ENCODE measurements at regions of chr16 and their contacts with region 1.

Region 1: DNA sequence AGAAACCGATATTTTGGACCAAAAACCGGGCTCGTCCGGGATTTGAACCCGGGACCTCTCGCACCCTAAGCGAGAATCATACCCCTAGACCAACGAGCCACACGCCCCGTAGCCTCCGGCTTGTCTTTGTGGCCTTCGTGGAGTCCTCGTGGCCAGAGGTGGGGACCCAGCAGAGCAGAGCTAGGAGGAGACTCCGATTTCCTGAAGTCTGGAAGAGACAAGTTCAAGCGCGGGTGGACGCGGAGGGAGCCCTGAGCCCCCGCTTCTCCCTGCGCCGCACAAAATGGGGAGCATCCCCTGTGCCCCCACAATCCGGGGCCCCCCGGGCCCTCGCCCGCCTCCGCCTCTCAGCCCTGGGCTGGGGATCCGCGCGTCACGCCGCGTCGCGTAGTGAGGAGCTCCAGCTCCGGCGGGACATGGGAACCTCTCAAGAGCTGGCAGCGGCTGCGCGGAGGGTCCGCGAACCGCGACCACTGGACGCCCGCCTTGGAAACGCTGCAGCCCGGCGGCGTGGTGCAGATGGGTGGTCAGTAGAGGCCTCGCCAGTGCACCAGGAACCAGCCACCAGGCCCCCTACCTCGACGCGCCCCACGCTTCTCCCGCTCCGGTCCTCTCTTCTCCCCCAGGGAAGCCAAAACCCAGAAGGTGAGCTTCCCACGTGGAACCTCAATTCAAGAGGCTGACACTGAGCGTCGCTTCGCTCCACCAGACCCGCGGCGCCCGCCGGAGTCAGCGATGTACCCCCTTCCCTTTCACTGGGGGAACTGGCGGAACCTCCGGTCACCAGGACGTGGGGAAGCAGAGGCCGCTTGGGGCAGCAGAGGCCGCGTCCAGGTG is 5.2 kb upstream of the OR1F1 start:
- DNase-seq: no peak
- ATAC-seq: peak; percentile 84
- H3K4me3 ChIP-seq: peak overlapping the region; percentile 64 to 85
- H3K27ac ChIP-seq: peak overlapping the region; percentile 42; the same call in 1 of the 2 replicates
- H3K4me1 ChIP-seq: peaks cover 8% of the 10 kb centered on the region
- H3K27me3 ChIP-seq: no peaks in the 10 kb centered on the region
- CTCF ChIP-seq: peak; percentile 83; the same call in 1 of the 2 replicates

Region 2: DNA sequence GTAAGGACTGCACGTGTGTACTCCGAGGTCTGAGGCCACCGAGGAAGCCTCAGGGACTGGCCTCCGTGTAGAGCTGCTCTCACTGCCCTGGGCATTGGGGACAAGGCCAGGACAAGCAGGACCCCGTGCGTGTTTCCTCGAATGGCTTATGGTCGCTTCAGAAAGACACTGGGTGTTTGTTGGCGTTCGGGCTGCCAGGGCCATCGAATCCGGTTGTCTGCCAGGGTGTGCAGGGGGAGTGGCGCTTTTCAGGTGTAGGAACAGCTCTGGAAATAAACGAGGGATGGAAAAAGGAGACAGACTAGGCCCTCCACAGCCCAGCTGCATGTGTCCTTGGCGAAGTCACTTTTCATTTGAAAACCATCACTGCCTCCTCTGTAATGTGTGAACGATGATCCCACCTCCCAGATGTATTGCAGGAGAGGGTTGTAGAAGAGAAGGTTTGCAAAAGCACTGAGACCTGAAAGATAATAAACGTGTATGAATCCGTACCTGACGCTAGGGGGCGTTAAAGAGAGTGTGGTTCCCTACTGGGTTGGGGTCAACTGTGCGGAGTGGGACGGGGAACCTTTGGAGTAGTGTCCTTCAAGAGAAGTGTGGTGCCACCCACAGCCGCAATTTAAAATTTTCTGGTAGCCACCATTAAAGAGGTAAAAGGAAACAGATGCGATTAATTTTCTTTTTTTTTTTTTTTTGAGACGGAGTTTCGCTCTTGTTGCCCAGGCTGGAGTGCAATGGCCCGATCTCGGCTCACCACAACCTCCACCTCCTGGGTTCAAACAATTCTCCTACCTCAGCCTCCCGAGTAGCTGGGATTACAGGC is 81.6 kb before region 1 on chr16:
- CTCF ChIA-PET with region 1: interaction called, 12 read pairs
- POLR2A ChIA-PET with region 1: no interaction called
- in situ Hi-C with region 1: no loop called
- intact Hi-C with region 1: no loop called
- DNase-seq: no peak
- ATAC-seq: no peak
- H3K4me3 ChIP-seq: no peak overlapping the region
- H3K27ac ChIP-seq: peak overlapping the region; percentile 70; the same call in 1 of the 2 replicates
- H3K4me1 ChIP-seq: peaks cover 9% of the 10 kb centered on the region
- H3K27me3 ChIP-seq: no peaks in the 10 kb centered on the region
- CTCF ChIP-seq: peak; percentile 91